ENCODE measurements at regions of chr20 and their contacts with region 1.

Region 1: DNA sequence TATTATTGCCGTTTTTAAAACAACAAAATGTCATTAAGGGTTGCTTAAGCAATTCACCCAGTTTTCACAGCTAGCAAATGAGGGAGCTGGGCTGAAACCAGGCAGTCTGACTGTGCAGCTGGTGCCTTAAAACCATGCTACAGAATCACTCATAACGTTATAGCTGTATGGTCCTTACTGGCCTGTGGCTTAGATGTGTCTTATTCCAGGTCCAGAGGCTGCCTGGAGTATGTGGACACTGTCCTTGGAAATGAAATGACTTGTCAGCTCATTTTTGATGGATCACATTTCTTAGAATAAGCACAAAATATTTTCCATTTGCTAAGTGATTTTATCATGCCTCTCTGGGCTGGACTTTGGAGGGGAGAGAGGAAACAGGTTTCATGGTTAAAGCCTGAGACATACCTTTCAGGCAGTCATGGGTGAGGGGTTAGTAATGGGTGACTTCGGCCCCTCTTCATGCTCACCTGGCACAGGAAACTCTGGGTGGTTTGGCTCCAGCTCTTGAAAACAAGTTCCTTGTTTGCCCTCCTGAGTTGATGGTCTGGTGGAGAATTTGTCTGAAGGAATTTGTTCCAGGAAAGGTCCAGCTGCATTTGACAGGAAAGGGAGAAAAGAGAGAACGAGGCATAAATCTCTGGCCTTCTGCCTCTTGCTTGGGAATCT is 823.2 kb downstream of the DHX35 start:
- DNase-seq: no peak
- ATAC-seq: peak; percentile 68
- H3K4me3 ChIP-seq: no peak overlapping the region
- H3K27ac ChIP-seq: no peak overlapping the region
- H3K4me1 ChIP-seq: no peaks in the 10 kb centered on the region
- H3K27me3 ChIP-seq: no peaks in the 10 kb centered on the region
- CTCF ChIP-seq: no peak
- EP300 ChIP-seq: no peak
- POLR2A ChIP-seq: no peak
- RAD21 ChIP-seq: no peak

Region 2: DNA sequence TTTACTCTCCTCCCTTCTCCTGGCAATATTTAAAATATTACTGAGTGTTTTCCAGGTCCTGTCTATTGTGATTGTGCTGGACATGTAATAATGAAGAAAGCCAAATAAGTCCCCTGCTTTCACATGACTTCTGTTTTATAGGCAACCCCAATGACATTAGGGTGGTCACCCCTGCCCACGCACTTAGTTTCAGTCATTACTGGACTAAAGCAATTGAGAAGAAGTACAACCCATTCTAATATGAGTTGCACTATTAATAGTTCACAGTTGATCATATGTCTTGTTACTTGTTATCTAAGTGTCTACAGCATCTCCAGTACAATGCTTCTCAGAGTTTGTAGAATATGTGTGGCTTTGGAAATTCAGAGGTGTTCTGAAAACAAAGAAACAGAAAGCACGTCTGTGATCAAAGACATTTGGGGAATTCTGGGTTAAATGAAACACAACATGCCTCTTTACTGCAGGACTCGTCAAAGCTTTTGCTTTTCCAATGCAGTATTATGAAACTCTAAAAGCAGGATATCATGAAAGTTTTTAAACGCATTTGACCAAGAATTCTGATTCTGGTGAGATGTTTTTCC is 33.7 kb before region 1 on chr20:
- CTCF ChIA-PET with region 1: interaction called, 3 read pairs
- POLR2A ChIA-PET with region 1: interaction called, 4 read pairs
- RAD21 ChIA-PET with region 1: interaction called, 7 read pairs
- SMC1A ChIA-PET with region 1: interaction called, 11 read pairs
- in situ Hi-C with region 1: no loop called
- intact Hi-C with region 1: no loop called
- DNase-seq: peak; percentile 12
- ATAC-seq: peak; percentile 84
- H3K4me3 ChIP-seq: no peak overlapping the region
- H3K27ac ChIP-seq: no peak overlapping the region
- H3K4me1 ChIP-seq: no peaks in the 10 kb centered on the region
- H3K27me3 ChIP-seq: no peaks in the 10 kb centered on the region
- CTCF ChIP-seq: no peak
- EP300 ChIP-seq: peak; percentile 60 to 62; a peak in 3 of 4 replicates
- POLR2A ChIP-seq: no peak
- RAD21 ChIP-seq: no peak

Region 3: DNA sequence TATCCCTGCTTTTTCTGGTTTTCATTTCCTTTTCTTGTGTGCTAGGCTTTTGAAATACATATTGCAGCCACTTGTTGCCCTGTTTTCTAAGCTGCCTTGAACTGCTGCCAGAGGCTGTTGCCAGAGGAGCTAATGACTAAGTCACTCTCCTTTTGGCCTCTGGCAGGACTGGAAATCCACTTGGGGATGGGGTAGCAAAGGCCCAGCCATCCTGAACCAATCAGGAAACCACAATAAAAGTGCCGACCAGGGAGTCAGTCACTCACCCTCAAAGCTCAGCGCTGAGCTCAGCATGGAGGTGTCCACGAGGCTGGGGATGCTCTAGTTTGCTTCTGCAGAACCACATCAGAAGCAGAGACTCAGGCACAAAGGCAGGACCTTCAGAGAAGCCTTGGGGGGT is 10.3 kb before region 1 on chr20:
- CTCF ChIA-PET with region 1: no interaction called
- POLR2A ChIA-PET with region 1: no interaction called
- RAD21 ChIA-PET with region 1: no interaction called
- SMC1A ChIA-PET with region 1: interaction called, 10 read pairs
- in situ Hi-C with region 1: no loop called
- intact Hi-C with region 1: no loop called
- DNase-seq: no peak
- ATAC-seq: no peak
- H3K4me3 ChIP-seq: no peak overlapping the region
- H3K27ac ChIP-seq: no peak overlapping the region
- H3K4me1 ChIP-seq: no peaks in the 10 kb centered on the region
- H3K27me3 ChIP-seq: no peaks in the 10 kb centered on the region
- CTCF ChIP-seq: no peak
- EP300 ChIP-seq: no peak
- POLR2A ChIP-seq: no peak
- RAD21 ChIP-seq: no peak

Region 4: DNA sequence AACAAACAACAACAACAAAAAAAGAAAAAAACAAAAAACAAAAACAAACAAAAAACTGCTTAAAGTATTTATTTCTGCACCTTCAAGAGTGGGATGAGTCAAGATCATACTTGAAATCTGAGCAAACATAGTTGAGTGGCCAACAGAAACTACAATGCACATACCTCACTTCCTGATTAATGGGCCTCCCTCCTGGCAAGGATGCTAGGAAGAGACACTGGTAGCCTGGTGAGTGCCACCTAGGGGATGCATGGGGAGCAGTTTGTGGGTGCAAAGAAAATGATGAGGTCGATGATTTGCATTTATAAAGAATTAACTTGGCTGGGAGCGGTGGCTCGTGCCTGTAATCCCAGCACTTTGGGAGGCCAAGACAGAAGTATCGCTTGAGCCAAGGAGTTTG is 95.5 kb after region 1 on chr20:
- CTCF ChIA-PET with region 1: no interaction called
- POLR2A ChIA-PET with region 1: no interaction called
- RAD21 ChIA-PET with region 1: no interaction called
- SMC1A ChIA-PET with region 1: no interaction called
- in situ Hi-C with region 1: no loop called
- intact Hi-C with region 1: no loop called
- DNase-seq: no peak
- ATAC-seq: peak; percentile 70
- H3K4me3 ChIP-seq: no peak overlapping the region
- H3K27ac ChIP-seq: no peak overlapping the region
- H3K4me1 ChIP-seq: no peaks in the 10 kb centered on the region
- H3K27me3 ChIP-seq: no peaks in the 10 kb centered on the region
- CTCF ChIP-seq: peak; percentile 13 to 29 (median 20); a peak in 3 of 6 replicates
- EP300 ChIP-seq: no peak
- POLR2A ChIP-seq: no peak
- RAD21 ChIP-seq: no peak